Stomach (tissue), 19 donors: ENCODE measurements at regions of chr7 and their contacts with region 1.

Region 1: GRCh38 chr7:86939197-86939814 is 120.1 kb downstream of the ELAPOR2 start:
- DNase-seq: peak in 1 of 2 donors; percentile 86
- H3K4me3 ChIP-seq: no peak overlapping the region
- H3K27ac ChIP-seq: no peak overlapping the region
- H3K4me1 ChIP-seq: peaks cover 0 to 3% (median 0%) of the 10 kb centered on the region in 4 donors
- H3K27me3 ChIP-seq: no peaks in the 10 kb centered on the region
- CTCF ChIP-seq: peak in 5 of 7 experiments; percentile 44 to 74 (median 62)
- EP300 ChIP-seq: no peak
- POLR2A ChIP-seq: no peak

Region 2: GRCh38 chr7:87234949-87235348 is 295.6 kb after region 1 on chr7:
- intact Hi-C with region 1: loop called (anchors 5 kb)
- DNase-seq: no peak
- H3K4me3 ChIP-seq: no peak overlapping the region
- H3K27ac ChIP-seq: no peak overlapping the region
- H3K4me1 ChIP-seq: peaks cover 0 to 14% (median 5%) of the 10 kb centered on the region in 4 donors
- H3K27me3 ChIP-seq: no peaks in the 10 kb centered on the region
- CTCF ChIP-seq: no peak
- EP300 ChIP-seq: no peak
- POLR2A ChIP-seq: no peak